ENCODE measurements at regions of chr15 and their contacts with region 1.

Region 1: DNA sequence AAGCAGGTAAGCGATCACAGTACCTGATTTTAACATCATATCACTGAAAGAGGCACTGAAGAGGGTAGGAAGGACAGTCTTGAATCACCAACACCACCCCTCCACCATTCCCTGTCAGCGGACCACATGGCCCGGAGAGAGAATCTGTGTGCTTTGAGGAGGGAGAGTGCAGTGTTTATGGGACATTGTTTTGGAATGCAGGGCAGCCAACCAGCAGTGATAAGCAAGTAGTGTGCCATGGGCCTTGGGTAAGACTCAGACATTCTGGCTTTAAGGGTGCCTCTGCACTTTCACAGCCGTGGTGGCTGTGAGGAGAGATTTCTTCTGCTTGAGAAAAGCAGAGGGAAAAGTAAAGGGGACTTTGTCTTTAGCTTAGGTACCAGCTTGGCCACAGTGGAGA is 46.4 kb downstream of the FAM81A start:
- H3K4me3 ChIP-seq: no peak overlapping the region
- H3K27ac ChIP-seq: no peak overlapping the region
- H3K4me1 ChIP-seq: no peaks in the 10 kb centered on the region
- CTCF ChIP-seq: no peak

Region 2: DNA sequence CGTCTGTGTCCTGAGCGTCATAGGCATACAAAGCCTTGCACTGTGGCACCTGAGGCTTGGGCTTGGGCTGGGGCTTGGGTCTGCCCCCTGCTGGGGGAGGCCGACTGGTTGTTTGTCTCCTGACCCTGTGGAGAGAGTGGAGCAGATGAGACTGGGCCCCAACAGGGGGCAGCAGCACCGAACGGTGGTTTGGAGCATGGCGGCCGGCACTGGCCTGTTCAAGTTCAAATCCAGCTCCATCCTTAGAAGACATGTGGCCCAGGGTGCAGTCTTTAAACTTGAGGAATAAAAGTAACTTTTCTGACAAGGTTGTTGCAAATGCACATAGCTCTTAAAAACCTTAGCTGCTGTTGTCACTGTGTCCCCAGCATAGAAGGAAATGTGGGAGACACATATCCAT is 346.2 kb before region 1 on chr15:
- CTCF ChIA-PET with region 1: no interaction called
- POLR2A ChIA-PET with region 1: interaction called, 10 read pairs
- H3K4me3 ChIP-seq: no peak overlapping the region
- H3K27ac ChIP-seq: no peak overlapping the region
- H3K4me1 ChIP-seq: no peaks in the 10 kb centered on the region
- CTCF ChIP-seq: peak; percentile 50

Region 3: GRCh38 chr15:59501597-59501996 is 17.2 kb after region 1 on chr15:
- CTCF ChIA-PET with region 1: no interaction called
- POLR2A ChIA-PET with region 1: no interaction called
- H3K4me3 ChIP-seq: no peak overlapping the region
- H3K27ac ChIP-seq: no peak overlapping the region
- H3K4me1 ChIP-seq: no peaks in the 10 kb centered on the region
- CTCF ChIP-seq: no peak

Region 4: GRCh38 chr15:59741274-59741906 is 257.0 kb after region 1 on chr15:
- CTCF ChIA-PET with region 1: no interaction called
- POLR2A ChIA-PET with region 1: no interaction called
- H3K4me3 ChIP-seq: no peak overlapping the region
- H3K27ac ChIP-seq: no peak overlapping the region
- H3K4me1 ChIP-seq: peaks cover 4% of the 10 kb centered on the region
- CTCF ChIP-seq: peak; percentile 43